ENCODE measurements at regions of chrX and their contacts with region 1.

Region 1: GRCh38 chrX:130696542-130696941 is 206.5 kb downstream of the ENOX2 start:
- DNase-seq: no peak
- ATAC-seq: no peak

Region 2: DNA sequence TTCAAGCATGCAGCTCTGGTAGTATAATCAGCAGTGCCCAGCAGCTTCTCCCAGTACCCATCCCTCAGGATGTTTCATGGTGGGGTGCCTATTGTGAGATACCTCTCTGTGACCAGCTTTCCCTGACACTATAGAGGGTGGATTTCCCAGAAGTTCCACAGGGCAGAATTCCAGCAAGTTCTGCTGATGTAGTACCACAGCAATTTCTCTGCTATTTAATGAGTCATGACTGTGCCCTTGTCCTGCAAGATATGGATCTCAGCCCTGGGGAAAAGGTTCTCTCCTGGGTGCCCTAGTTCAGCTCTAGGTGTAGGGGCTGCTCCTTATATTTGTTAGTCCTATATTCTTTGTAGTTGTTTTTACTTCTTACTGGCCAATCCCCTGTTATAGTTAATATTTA is 31.7 kb after region 1 on chrX:
- intact Hi-C with region 1: loop called (anchors 2 kb)
- DNase-seq: no peak
- ATAC-seq: no peak

Region 3: DNA sequence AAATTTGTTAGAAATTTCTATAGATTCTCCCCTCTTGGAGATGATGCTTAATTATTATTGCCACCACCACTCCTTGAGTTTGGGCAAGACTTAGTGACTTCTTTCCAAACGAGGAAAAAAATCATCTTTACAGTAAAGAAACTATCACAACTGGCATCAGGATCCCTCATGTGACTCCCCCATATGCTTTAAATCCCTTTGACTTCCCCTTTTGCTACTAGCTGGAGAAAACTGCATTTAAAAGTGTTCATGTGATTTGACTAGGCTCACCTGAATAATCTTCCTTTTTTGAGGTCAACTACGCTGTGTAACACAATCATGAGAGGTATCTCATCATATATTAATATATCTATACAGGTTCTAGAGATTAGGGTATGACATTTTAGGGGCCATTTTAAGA is 236.8 kb after region 1 on chrX:
- intact Hi-C with region 1: no loop called
- DNase-seq: no peak
- ATAC-seq: no peak